CD8-positive, alpha-beta memory T cell (primary cell): ENCODE measurements at regions of chr1 and their contacts with region 1.

Region 1: GRCh38 chr1:153532769-153533599 is 2.8 kb downstream of the S100A6 start:
- DNase-seq: peak; percentile 66 to 82 (median 70)
- H3K4me3 ChIP-seq: peak overlapping the region; percentile 35
- H3K4me3 Mint-ChIP-seq: peak overlapping the region; percentile 87 to 98 (median 96)
- H3K27ac ChIP-seq: peak overlapping the region; percentile 41
- H3K27ac Mint-ChIP-seq: peak overlapping the region; percentile 94 to 100 (median 96)
- H3K4me1 ChIP-seq: peaks cover 60% of the 10 kb centered on the region
- H3K4me1 Mint-ChIP-seq: peaks cover 61 to 76% (median 68%) of the 10 kb centered on the region in 3 donors
- H3K27me3 ChIP-seq: no peaks in the 10 kb centered on the region
- H3K27me3 Mint-ChIP-seq: peaks cover 0 to 1% of the 10 kb centered on the region in 2 donors

Region 2: DNA sequence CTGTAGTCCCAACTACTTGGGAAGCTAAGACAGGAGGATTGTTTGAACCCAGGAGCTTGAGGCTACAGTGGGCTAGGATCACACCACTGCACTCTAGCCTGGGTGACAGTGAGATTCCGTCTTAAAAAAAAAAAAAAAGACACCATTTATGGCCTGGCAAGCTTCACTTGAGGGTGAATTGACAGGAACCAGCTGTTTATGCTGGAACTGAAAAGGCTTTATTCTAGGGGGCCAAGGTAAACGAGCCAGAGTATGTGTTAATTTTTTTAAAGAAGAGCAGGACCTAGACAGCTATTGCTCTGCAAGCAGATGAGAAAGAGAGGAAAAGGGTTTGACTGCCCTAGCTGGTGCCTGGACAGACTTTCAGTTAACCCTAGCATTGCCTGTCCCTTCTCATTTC is 34.2 kb before region 1 on chr1:
- CTCF ChIA-PET with region 1: no interaction called
- POLR2A ChIA-PET with region 1: no interaction called
- DNase-seq: no peak
- H3K4me3 ChIP-seq: no peak overlapping the region
- H3K4me3 Mint-ChIP-seq: no peak overlapping the region
- H3K27ac ChIP-seq: no peak overlapping the region
- H3K27ac Mint-ChIP-seq: no peak overlapping the region
- H3K4me1 ChIP-seq: no peaks in the 10 kb centered on the region
- H3K4me1 Mint-ChIP-seq: no peaks in the 10 kb centered on the region
- H3K27me3 ChIP-seq: peaks cover 5% of the 10 kb centered on the region
- H3K27me3 Mint-ChIP-seq: peaks cover 18 to 56% of the 10 kb centered on the region in 2 donors

Region 3: DNA sequence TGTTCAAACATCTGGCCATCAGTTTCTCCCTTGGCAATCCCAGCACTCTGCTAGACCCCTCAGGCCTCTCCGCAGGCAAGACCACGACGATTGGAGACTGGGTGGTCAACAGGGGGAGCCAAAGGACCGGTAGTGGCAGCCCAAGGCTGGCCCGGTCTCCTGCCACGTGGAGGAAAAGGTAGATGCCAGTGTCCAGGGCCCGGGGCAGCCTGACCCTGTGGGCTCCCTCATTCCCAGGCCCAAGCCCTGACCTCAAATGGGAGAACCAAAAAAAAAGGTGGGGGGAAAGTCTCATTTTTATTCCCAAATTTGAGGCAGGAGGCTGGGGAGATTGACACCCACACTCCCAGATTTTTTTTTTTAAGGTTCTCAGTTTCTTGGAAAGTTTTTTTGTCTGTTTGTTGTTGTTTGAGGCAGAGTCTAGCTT is 22.0 kb before region 1 on chr1:
- CTCF ChIA-PET with region 1: interaction called, 34 read pairs
- POLR2A ChIA-PET with region 1: no interaction called
- DNase-seq: peak; percentile 64 to 85 (median 69)
- H3K4me3 ChIP-seq: no peak overlapping the region
- H3K4me3 Mint-ChIP-seq: no peak overlapping the region
- H3K27ac ChIP-seq: no peak overlapping the region
- H3K27ac Mint-ChIP-seq: peak overlapping the region in 2 of 8 donors; percentile 32 to 51
- H3K4me1 ChIP-seq: peaks cover 3% of the 10 kb centered on the region
- H3K4me1 Mint-ChIP-seq: peaks cover 7 to 8% (median 7%) of the 10 kb centered on the region in 3 donors
- H3K27me3 ChIP-seq: no peaks in the 10 kb centered on the region
- H3K27me3 Mint-ChIP-seq: no peaks in the 10 kb centered on the region

Region 4: GRCh38 chr1:153545067-153546055 is 12.4 kb after region 1 on chr1 and contains the start of gene S100A4:
- CTCF ChIA-PET with region 1: interaction called, 68 read pairs
- POLR2A ChIA-PET with region 1: interaction called, 121 read pairs
- DNase-seq: peak; percentile 56 to 90 (median 78)
- H3K4me3 ChIP-seq: peak within 1 kb of the TSS; percentile 88
- H3K4me3 Mint-ChIP-seq: peak within 1 kb of the TSS; percentile 93 to 100 (median 98)
- H3K27ac ChIP-seq: peak within 1 kb of the TSS; percentile 79
- H3K27ac Mint-ChIP-seq: peak within 1 kb of the TSS; percentile 91 to 99 (median 97)
- H3K4me1 ChIP-seq: peaks cover 73% of the 10 kb centered on the region
- H3K4me1 Mint-ChIP-seq: peaks cover 59 to 70% (median 64%) of the 10 kb centered on the region in 3 donors
- H3K27me3 ChIP-seq: no peaks in the 10 kb centered on the region
- H3K27me3 Mint-ChIP-seq: peaks cover 0 to 3% of the 10 kb centered on the region in 2 donors
- total RNA-seq, gene S100A4: 125 to 132 TPM

Region 5: GRCh38 chr1:153566440-153567379 is 33.7 kb after region 1 on chr1:
- CTCF ChIA-PET with region 1: interaction called, 125 read pairs
- POLR2A ChIA-PET with region 1: interaction called, 6 read pairs
- DNase-seq: peak in 4 of 5 donors; percentile 54 to 89 (median 66)
- H3K4me3 ChIP-seq: no peak overlapping the region
- H3K4me3 Mint-ChIP-seq: peak overlapping the region in 6 of 7 donors; percentile 30 to 63 (median 46)
- H3K27ac ChIP-seq: peak overlapping the region; percentile 43
- H3K27ac Mint-ChIP-seq: peak overlapping the region; percentile 76 to 91 (median 85)
- H3K4me1 ChIP-seq: peaks cover 24% of the 10 kb centered on the region
- H3K4me1 Mint-ChIP-seq: peaks cover 27 to 35% (median 34%) of the 10 kb centered on the region in 3 donors
- H3K27me3 ChIP-seq: no peaks in the 10 kb centered on the region
- H3K27me3 Mint-ChIP-seq: peaks cover 1 to 16% of the 10 kb centered on the region in 2 donors

Region 6: DNA sequence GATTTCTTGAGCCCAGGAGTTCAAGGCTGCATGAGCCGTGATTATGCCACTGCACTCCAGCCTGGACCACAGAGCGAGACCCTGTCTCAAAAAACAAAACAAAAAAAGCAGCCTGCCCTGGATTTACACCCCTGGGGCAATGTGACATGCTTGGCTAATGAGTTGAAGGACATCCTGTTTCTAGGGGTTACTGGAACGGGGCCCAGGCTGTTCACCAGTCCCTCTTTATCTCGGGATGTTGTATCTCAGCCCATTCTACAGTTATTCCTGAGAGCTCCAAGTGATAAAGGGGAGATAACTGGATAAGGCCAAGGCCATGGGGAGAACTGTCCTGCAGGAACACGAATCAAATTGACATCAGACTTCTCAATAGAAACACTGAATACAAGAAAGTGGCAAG is 54.3 kb after region 1 on chr1:
- CTCF ChIA-PET with region 1: no interaction called
- POLR2A ChIA-PET with region 1: no interaction called
- DNase-seq: no peak
- H3K4me3 ChIP-seq: no peak overlapping the region
- H3K4me3 Mint-ChIP-seq: no peak overlapping the region
- H3K27ac ChIP-seq: no peak overlapping the region
- H3K27ac Mint-ChIP-seq: no peak overlapping the region
- H3K4me1 ChIP-seq: no peaks in the 10 kb centered on the region
- H3K4me1 Mint-ChIP-seq: no peaks in the 10 kb centered on the region
- H3K27me3 ChIP-seq: peaks cover 4% of the 10 kb centered on the region
- H3K27me3 Mint-ChIP-seq: peaks cover 7 to 9% of the 10 kb centered on the region in 2 donors

Region 7: DNA sequence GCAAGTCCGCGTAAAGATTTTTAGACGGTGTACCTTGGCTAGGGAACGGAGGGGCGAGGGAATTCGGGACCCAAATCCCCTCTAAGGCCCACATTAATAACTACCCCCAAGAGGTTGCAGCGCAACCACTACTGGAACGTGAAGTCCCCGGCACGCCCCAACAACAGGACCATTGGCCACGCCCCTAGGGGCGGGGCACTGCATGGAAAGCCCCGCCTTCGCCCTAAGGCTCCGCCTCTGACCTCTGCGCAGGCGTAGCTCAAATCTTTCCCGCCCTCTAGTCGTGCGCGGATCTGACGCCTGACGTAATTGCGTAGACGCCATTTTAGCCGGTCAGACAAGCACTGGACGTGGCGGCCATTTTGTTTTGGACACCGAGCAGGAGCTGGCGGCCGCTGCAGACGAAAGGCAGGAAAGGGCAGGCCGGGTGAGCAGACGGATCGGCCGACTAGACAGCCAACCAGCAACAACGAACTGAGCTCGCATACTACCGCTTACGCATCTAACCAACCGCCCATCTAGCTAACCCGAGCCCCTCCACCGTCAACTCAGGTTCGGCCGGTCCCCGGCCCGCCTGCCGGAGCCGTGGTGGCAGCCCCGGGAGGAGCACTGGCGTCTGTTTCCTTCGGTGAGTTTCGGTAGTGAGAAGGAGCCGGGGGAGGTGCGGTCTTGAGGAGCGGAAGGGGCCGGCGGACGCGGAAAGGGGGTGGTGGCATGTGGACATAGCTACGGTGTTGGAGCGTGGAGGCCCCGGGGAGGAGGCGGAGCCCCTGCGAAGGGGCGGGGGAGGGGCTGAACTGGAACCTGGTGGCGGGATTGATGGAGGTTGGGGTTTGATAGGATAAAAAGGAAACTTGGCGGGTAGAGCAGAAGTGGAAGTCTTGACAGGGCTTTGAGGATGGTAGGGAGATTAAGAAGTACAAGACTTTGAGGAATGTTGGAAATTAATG is 101.0 kb after region 1 on chr1 and contains the start of gene CHTOP:
- CTCF ChIA-PET with region 1: interaction called, 5 read pairs
- POLR2A ChIA-PET with region 1: interaction called, 24 read pairs
- DNase-seq: peak; percentile 89 to 98 (median 96)
- H3K4me3 ChIP-seq: peak within 1 kb of the TSS; percentile 99
- H3K4me3 Mint-ChIP-seq: peak within 1 kb of the TSS; percentile 97 to 100 (median 99)
- H3K27ac ChIP-seq: peak within 1 kb of the TSS; percentile 100
- H3K27ac Mint-ChIP-seq: peak within 1 kb of the TSS; percentile 97 to 100 (median 100)
- H3K4me1 ChIP-seq: peaks cover 31% of the 10 kb centered on the region
- H3K4me1 Mint-ChIP-seq: peaks cover 29 to 48% (median 44%) of the 10 kb centered on the region in 3 donors
- H3K27me3 ChIP-seq: no peaks in the 10 kb centered on the region
- H3K27me3 Mint-ChIP-seq: peaks cover 0 to 2% of the 10 kb centered on the region in 2 donors
- total RNA-seq, gene CHTOP: 95.9 to 98.9 TPM